Activated CD4-positive, alpha-beta T cell treated with anti-CD3 and anti-CD28 coated beads for 36 hours (primary cell): ENCODE measurements at regions of chr12 and their contacts with region 1.

Region 1: DNA sequence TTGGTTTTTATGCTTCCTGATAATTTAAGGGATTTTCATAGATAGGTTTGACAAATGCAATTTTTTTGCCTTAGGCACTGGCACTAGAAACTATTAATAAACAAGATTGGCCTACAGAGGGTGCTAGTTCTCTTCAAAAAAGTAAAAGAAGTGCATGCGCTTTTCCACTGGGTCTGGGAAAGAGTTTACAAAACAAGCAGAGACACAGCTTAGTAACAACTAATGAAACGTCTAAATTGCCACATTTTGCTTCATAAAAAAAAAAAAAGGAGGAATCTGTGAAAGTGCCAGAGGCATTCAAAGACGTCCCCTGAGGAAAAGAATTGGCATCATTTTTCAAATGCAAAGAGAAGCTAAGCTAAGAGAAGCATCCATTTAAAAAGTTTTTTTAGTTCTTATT is 58.3 kb upstream of the EEA1 start:
- DNase-seq: no peak
- ATAC-seq: no peak
- H3K4me3 Mint-ChIP-seq: peak overlapping the region; percentile 22
- H3K27ac Mint-ChIP-seq: peak overlapping the region; percentile 88
- H3K4me1 Mint-ChIP-seq: peaks cover 37% of the 10 kb centered on the region
- H3K27me3 Mint-ChIP-seq: no peaks in the 10 kb centered on the region

Region 2: GRCh38 chr12:92912052-92912451 is 75.3 kb before region 1 on chr12:
- CTCF ChIA-PET with region 1: interaction called, 10 read pairs
- POLR2A ChIA-PET with region 1: no interaction called
- intact Hi-C with region 1: no loop called
- DNase-seq: peak; percentile 38
- ATAC-seq: peak; percentile 90
- H3K4me3 Mint-ChIP-seq: no peak overlapping the region
- H3K27ac Mint-ChIP-seq: peak overlapping the region; percentile 78
- H3K4me1 Mint-ChIP-seq: peaks cover 62% of the 10 kb centered on the region
- H3K27me3 Mint-ChIP-seq: no peaks in the 10 kb centered on the region

Region 3: GRCh38 chr12:93008044-93008778 is 20.8 kb after region 1 on chr12:
- CTCF ChIA-PET with region 1: interaction called, 13 read pairs
- POLR2A ChIA-PET with region 1: interaction called, 3 read pairs
- intact Hi-C with region 1: no loop called
- DNase-seq: no peak
- ATAC-seq: peak; percentile 79
- H3K4me3 Mint-ChIP-seq: no peak overlapping the region
- H3K27ac Mint-ChIP-seq: no peak overlapping the region
- H3K4me1 Mint-ChIP-seq: peaks cover 9% of the 10 kb centered on the region
- H3K27me3 Mint-ChIP-seq: peaks cover 2% of the 10 kb centered on the region

Region 4: DNA sequence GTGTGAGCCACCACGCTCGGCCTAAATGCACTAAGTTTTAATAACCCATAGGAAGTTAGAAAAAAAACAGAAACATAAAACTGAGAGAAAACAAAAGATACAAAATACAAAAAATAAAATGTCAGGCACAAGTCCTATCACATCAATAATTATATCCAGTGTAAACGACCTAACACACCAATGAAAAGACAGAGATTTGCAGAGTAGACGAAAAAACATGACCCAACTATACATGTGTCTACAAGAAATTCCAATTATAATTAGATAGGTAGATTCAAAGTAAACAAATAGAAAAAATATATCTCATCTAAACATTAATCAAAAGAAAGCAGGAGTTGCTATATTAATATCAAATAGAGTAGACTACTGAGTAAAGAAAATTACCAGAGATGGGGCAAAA is 320.9 kb after region 1 on chr12:
- CTCF ChIA-PET with region 1: no interaction called
- POLR2A ChIA-PET with region 1: no interaction called
- intact Hi-C with region 1: no loop called
- DNase-seq: no peak
- ATAC-seq: no peak
- H3K4me3 Mint-ChIP-seq: no peak overlapping the region
- H3K27ac Mint-ChIP-seq: no peak overlapping the region
- H3K4me1 Mint-ChIP-seq: no peaks in the 10 kb centered on the region
- H3K27me3 Mint-ChIP-seq: no peaks in the 10 kb centered on the region

Region 5: DNA sequence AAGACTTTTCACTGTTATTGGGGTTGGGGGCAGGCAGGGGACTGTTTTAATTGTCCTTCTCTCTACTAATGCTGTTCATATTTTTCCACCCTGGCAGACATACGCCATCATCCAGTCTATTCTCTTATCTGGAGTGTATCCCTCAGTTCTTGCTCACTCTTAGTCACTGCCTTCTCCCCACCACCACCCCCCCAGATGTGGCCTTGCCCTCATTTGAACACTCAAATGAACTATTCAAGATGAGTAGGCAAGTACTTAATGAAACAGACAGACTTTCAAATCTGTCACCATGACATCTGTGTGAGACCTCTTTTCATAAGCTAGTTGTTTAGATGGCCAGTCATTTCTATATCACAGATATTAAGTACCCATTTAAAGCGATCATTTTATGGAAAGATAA is 400.4 kb after region 1 on chr12:
- CTCF ChIA-PET with region 1: no interaction called
- POLR2A ChIA-PET with region 1: interaction called, 4 read pairs
- intact Hi-C with region 1: loop called (anchors 2 kb)
- DNase-seq: peak; percentile 74
- ATAC-seq: peak; percentile 89
- H3K4me3 Mint-ChIP-seq: no peak overlapping the region
- H3K27ac Mint-ChIP-seq: peak overlapping the region; percentile 53
- H3K4me1 Mint-ChIP-seq: peaks cover 62% of the 10 kb centered on the region
- H3K27me3 Mint-ChIP-seq: no peaks in the 10 kb centered on the region

Region 6: GRCh38 chr12:93419388-93420034 is 432.1 kb after region 1 on chr12:
- CTCF ChIA-PET with region 1: interaction called, 41 read pairs
- POLR2A ChIA-PET with region 1: interaction called, 4 read pairs
- intact Hi-C with region 1: loop called (anchors 1 kb)
- DNase-seq: no peak
- ATAC-seq: peak; percentile 31
- H3K4me3 Mint-ChIP-seq: no peak overlapping the region
- H3K27ac Mint-ChIP-seq: peak overlapping the region; percentile 44
- H3K4me1 Mint-ChIP-seq: peaks cover 90% of the 10 kb centered on the region
- H3K27me3 Mint-ChIP-seq: no peaks in the 10 kb centered on the region

Region 7: DNA sequence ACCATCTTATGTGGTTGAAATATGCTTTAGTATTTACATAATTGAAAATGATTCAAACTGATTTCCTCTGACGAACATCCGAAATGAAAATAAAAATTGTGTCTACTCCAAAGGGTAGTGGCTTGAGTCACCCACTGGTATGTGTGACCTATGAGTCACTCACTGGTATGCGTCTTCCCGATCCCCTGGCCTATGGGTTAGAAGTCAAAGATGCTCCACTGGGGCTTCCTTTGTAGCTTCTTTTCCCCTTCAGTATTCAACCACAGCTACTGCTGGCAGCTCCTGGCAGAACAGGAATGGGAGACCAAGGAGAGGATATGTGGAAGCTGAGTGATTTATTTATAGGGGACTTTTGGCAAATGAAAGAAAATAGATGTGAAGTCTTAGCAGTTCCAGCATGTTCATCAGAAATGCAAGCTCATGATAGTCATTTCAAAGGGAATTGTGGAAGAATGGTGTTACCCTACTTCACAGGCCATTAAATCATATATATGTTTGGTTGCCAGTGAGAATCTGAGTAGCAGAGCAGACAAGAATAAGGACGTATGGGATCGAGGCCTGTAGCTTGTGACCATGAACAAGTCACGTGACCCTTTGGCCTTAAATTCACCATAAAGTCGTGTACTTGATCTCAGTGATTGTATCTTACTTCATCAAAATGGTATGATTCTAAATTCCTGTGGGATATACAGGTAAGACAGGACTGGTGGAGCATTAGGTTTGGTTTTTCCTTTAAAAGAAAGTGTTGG is 798.1 kb after region 1 on chr12:
- CTCF ChIA-PET with region 1: no interaction called
- POLR2A ChIA-PET with region 1: interaction called, 5 read pairs
- intact Hi-C with region 1: loop called in 1 of 2 experiments (anchors 5 kb)
- DNase-seq: peak; percentile 72
- ATAC-seq: peak; percentile 76
- H3K4me3 Mint-ChIP-seq: peak overlapping the region; percentile 20
- H3K27ac Mint-ChIP-seq: peak overlapping the region; percentile 87
- H3K4me1 Mint-ChIP-seq: peaks cover 70% of the 10 kb centered on the region
- H3K27me3 Mint-ChIP-seq: no peaks in the 10 kb centered on the region